Activated CD4-positive, alpha-beta T cell treated with anti-CD3 and anti-CD28 coated beads for 36 hours (primary cell): ENCODE measurements at regions of chr19 and their contacts with region 1.

Region 1: GRCh38 chr19:58154679-58155648 is 4.4 kb upstream of the ZNF329 start:
- DNase-seq: peak; percentile 99
- ATAC-seq: peak; percentile 87
- H3K4me3 Mint-ChIP-seq: peak overlapping the region; percentile 71
- H3K27ac Mint-ChIP-seq: peak overlapping the region; percentile 51
- H3K4me1 Mint-ChIP-seq: peaks cover 10% of the 10 kb centered on the region
- H3K27me3 Mint-ChIP-seq: no peaks in the 10 kb centered on the region

Region 2: GRCh38 chr19:57191141-57192076 is 963.6 kb before region 1 on chr19 and contains the start of gene ZNF264:
- CTCF ChIA-PET with region 1: no interaction called
- POLR2A ChIA-PET with region 1: no interaction called
- intact Hi-C with region 1: loop called in 1 of 2 experiments (anchors 10 kb)
- DNase-seq: peak; percentile 93
- ATAC-seq: peak; percentile 96
- H3K4me3 Mint-ChIP-seq: peak within 1 kb of the TSS; percentile 93
- H3K27ac Mint-ChIP-seq: peak within 1 kb of the TSS; percentile 95
- H3K4me1 Mint-ChIP-seq: peaks cover 28% of the 10 kb centered on the region
- H3K27me3 Mint-ChIP-seq: peaks cover 4% of the 10 kb centered on the region
- total RNA-seq, gene ZNF264: 14.8 to 21.1 TPM

Region 3: GRCh38 chr19:57578487-57579205 is 576.3 kb before region 1 on chr19 and contains the start of gene ZNF416:
- CTCF ChIA-PET with region 1: no interaction called
- POLR2A ChIA-PET with region 1: no interaction called
- intact Hi-C with region 1: loop called in 1 of 2 experiments (anchors 5 kb)
- DNase-seq: peak; percentile 97
- ATAC-seq: peak; percentile 96
- H3K4me3 Mint-ChIP-seq: peak within 1 kb of the TSS; percentile 77
- H3K27ac Mint-ChIP-seq: peak within 1 kb of the TSS; percentile 77
- H3K4me1 Mint-ChIP-seq: peaks cover 23% of the 10 kb centered on the region
- H3K27me3 Mint-ChIP-seq: no peaks in the 10 kb centered on the region
- total RNA-seq, gene ZNF416: 3.3 to 3.7 TPM

Region 4: DNA sequence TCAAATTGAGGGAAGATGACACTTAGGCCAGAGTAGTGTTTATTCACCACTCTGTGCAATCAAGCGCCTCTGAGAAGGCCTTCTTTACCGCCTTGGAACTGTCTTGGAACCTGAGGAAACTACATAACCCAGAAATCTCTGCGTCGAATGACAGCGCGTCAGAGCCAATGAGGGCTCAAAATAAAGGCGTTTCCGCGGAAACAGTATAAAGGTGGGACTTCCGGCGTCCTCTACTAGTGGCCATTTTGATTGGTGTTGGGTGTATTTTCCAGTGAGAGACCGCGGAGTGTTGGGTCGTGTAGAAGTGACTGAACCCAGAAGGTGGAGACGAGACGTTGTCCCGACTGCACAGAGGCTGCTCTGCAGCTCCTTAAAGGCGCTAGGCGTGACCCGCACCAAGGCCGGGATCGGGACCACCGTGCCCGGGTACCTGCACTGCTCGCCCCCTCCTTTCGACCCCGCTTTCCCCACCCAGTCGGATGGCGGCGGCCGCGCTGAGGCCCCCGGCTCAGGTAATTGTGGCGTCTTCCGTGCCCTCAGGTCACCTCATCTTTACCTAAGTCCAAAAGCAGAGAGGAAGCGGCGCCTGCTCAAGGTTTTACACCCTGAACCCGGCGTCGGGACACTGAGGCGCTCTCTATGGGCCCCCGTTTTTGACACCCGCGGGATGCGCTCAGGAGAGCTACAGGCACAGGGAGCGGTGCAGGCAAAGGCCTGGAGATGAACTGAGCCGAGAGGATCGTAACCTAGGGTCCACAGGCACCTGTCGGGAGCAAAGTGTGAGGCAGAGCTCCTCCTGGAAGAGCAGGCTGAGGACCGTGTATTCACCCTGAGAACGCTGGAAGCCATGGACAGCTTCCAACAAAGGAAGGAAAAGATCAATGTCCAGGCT is 408.1 kb before region 1 on chr19 and contains the start of gene ZNF776:
- CTCF ChIA-PET with region 1: no interaction called
- POLR2A ChIA-PET with region 1: no interaction called
- intact Hi-C with region 1: loop called in 1 of 2 experiments (anchors 2 kb)
- DNase-seq: peak; percentile 89
- ATAC-seq: peak; percentile 98
- H3K4me3 Mint-ChIP-seq: peak within 1 kb of the TSS; percentile 93
- H3K27ac Mint-ChIP-seq: peak within 1 kb of the TSS; percentile 98
- H3K4me1 Mint-ChIP-seq: peaks cover 15% of the 10 kb centered on the region
- H3K27me3 Mint-ChIP-seq: no peaks in the 10 kb centered on the region
- total RNA-seq, gene ZNF776: 8.9 to 14.7 TPM

Region 5: GRCh38 chr19:57914531-57914930 is 240.4 kb before region 1 on chr19:
- CTCF ChIA-PET with region 1: no interaction called
- POLR2A ChIA-PET with region 1: interaction called, 3 read pairs
- intact Hi-C with region 1: loop called in 1 of 2 experiments (anchors 1 kb)
- DNase-seq: no peak
- ATAC-seq: no peak
- H3K4me3 Mint-ChIP-seq: no peak overlapping the region
- H3K27ac Mint-ChIP-seq: no peak overlapping the region
- H3K4me1 Mint-ChIP-seq: peaks cover 27% of the 10 kb centered on the region
- H3K27me3 Mint-ChIP-seq: no peaks in the 10 kb centered on the region

Region 6: DNA sequence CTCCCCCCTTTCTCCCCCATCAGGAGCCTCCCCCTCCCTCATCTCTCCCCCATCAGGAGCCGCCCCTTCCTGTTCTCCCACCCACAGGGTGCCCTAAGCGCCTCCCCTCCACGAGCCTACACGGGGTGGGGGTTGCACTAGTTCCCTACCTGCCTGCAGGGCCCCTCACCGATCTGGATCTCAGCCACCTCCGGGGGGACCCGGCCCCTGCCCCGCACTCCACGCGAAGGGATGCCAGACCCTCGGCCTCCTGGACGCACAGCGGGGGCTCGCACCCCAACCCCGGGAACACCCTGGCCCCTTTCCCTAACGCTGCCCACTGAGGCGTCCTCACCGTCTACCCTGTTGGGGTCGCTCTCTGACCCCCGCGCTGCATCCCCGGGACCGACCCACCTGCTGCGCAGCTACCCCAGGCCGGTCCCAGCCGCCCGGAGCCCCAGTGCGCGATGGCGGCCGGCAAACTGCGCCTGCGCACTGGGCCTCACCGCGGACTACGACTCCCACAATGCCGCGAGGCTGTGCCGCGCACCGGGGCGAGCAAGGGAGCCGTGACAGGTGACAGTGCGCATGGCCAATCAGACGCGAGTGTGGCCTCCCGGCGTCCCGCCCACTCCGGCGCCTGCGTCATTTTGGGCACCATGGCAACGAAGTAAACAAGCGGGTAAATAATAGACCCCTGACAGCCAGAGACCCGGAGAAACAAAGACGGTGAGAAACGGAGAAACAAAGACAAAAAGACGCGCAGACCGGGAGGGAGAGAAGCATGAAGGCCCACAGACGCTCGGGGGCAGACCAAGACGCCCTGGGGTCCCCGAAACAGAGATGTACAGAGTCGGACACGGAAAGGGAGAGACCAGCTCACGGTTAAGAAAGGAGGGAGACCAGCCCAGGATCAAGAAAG is 56.9 kb before region 1 on chr19 and contains the start of gene ZSCAN18:
- CTCF ChIA-PET with region 1: no interaction called
- POLR2A ChIA-PET with region 1: no interaction called
- intact Hi-C with region 1: loop called in 1 of 2 experiments (anchors 1 kb)
- DNase-seq: peak; percentile 97
- ATAC-seq: peak; percentile 99
- H3K4me3 Mint-ChIP-seq: peak within 1 kb of the TSS; percentile 82
- H3K27ac Mint-ChIP-seq: peak within 1 kb of the TSS; percentile 97
- H3K4me1 Mint-ChIP-seq: peaks cover 13% of the 10 kb centered on the region
- H3K27me3 Mint-ChIP-seq: no peaks in the 10 kb centered on the region
- total RNA-seq, gene ZSCAN18: 23.1 to 29.2 TPM